Naive thymus-derived CD4-positive, alpha-beta T cell (primary cell): ENCODE measurements at regions of chr1 and their contacts with region 1.

Region 1: GRCh38 chr1:171485375-171486047 is at the start of gene PRRC2C:
- DNase-seq: peak; percentile 80 to 95 (median 94)
- ATAC-seq: peak; percentile 93
- H3K4me3 ChIP-seq: peak within 1 kb of the TSS; percentile 93
- H3K4me3 Mint-ChIP-seq: peak within 1 kb of the TSS; percentile 83 to 99 (median 96)
- H3K27ac ChIP-seq: peak within 1 kb of the TSS; percentile 99
- H3K27ac Mint-ChIP-seq: peak within 1 kb of the TSS; percentile 92 to 100 (median 97)
- H3K4me1 ChIP-seq: peaks cover 34 to 46% of the 10 kb centered on the region in 2 donors
- H3K4me1 Mint-ChIP-seq: peaks cover 39 to 54% (median 49%) of the 10 kb centered on the region in 7 donors
- H3K27me3 ChIP-seq: no peaks in the 10 kb centered on the region
- H3K27me3 Mint-ChIP-seq: no peaks in the 10 kb centered on the region
- total RNA-seq, gene PRRC2C: 256 to 341 (median 293) TPM

Region 2: DNA sequence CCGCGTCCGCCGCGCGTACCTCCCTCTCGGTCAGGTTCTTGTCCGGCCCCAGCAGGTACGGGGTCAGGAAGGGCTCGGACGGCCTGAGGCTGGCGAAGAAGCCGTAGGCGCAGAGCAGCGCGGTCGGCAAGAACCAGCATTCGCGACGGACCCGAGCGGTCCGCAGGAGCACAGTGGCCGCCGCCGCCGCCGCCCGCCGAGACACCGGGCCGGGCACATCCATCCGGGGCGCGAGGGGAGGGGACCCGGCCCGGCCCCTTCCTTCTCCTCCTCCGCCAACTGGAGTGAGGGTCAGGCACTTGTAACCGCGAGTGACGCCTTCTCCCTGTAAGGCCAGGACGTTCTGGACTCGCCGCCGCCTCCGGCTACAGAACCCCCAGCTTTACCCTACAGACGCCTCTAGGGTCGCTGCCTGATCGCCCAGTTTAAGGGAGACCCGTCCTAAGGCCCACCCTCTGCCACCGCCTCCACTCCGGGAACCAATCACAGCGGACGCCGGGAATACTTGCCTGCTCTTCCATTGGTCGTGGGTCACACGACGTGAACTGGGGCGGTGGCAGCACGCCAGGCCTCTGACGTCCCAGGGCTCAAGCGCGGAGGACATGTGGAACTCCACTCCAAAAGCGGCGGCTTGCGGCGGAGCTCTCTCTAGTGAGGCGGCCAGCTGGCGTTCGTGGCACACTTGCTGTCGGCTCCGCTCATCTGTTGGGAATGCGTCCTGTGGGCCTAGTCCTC is 1999.8 kb before region 1 on chr1 and contains the start of gene SLC19A2:
- CTCF ChIA-PET with region 1: no interaction called
- POLR2A ChIA-PET with region 1: no interaction called
- intact Hi-C with region 1: loop called (anchors 5 kb)
- DNase-seq: peak; percentile 79 to 94 (median 89)
- ATAC-seq: peak; percentile 99
- H3K4me3 ChIP-seq: peak within 1 kb of the TSS; percentile 66
- H3K4me3 Mint-ChIP-seq: peak within 1 kb of the TSS; percentile 87 to 98 (median 94)
- H3K27ac ChIP-seq: peak within 1 kb of the TSS; percentile 81
- H3K27ac Mint-ChIP-seq: peak within 1 kb of the TSS; percentile 86 to 98 (median 94)
- H3K4me1 ChIP-seq: peaks cover 4 to 12% of the 10 kb centered on the region in 2 donors
- H3K4me1 Mint-ChIP-seq: peaks cover 35 to 56% (median 46%) of the 10 kb centered on the region in 7 donors
- H3K27me3 ChIP-seq: no peaks in the 10 kb centered on the region
- H3K27me3 Mint-ChIP-seq: peaks cover 0 to 8% (median 0%) of the 10 kb centered on the region in 5 donors
- total RNA-seq, gene SLC19A2: 3.7 to 5.9 (median 4.8) TPM

Region 3: GRCh38 chr1:170074250-170075157 is 1411.0 kb before region 1 on chr1 and contains the start of gene KIFAP3:
- CTCF ChIA-PET with region 1: no interaction called
- POLR2A ChIA-PET with region 1: no interaction called
- intact Hi-C with region 1: loop called (anchors 2 to 10 kb)
- DNase-seq: peak; percentile 84 to 94 (median 92)
- ATAC-seq: peak; percentile 96
- H3K4me3 ChIP-seq: peak within 1 kb of the TSS; percentile 76
- H3K4me3 Mint-ChIP-seq: peak within 1 kb of the TSS; percentile 89 to 99 (median 96)
- H3K27ac ChIP-seq: peak within 1 kb of the TSS; percentile 90
- H3K27ac Mint-ChIP-seq: peak within 1 kb of the TSS; percentile 83 to 98 (median 94)
- H3K4me1 ChIP-seq: peaks cover 15 to 37% of the 10 kb centered on the region in 2 donors
- H3K4me1 Mint-ChIP-seq: peaks cover 34 to 65% (median 57%) of the 10 kb centered on the region in 7 donors
- H3K27me3 ChIP-seq: no peaks in the 10 kb centered on the region
- H3K27me3 Mint-ChIP-seq: peaks cover 0 to 3% (median 0%) of the 10 kb centered on the region in 5 donors
- total RNA-seq, gene KIFAP3: 12.8 to 23.8 (median 20.1) TPM

Region 4: DNA sequence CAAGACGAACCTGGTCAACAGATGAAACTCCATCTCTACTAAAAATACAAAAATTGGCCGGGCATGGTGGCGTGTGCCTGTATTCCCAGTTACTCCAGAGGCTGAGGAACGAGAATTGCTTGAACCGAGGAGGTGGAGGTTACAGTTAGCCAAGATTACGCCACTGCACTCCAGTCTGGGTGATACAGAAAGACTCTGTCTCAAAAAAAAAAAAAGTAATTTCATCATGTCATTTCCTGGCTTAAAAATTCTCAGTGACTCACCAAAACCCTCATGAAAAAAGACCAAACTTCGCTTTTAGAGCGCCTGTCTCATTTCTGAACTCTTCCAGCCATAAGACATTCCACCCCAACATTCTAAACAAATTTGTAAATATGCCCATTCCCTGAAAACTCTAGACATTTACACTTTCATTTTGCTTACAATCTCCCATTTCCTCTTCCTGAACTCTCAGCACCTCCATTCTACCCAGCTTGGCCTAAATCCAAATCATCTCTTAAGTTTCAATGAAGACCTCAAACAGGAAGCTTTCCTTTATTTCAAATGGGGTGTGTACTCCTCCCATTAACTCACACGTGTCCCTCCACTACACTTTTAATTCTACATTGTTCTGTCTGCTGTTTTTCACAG is 50.7 kb before region 1 on chr1:
- CTCF ChIA-PET with region 1: no interaction called
- POLR2A ChIA-PET with region 1: no interaction called
- intact Hi-C with region 1: loop called in 1 of 2 experiments (anchors 1 kb)
- DNase-seq: peak in 7 of 9 donors; percentile 1 to 30 (median 11)
- ATAC-seq: peak; percentile 54
- H3K4me3 ChIP-seq: no peak overlapping the region
- H3K4me3 Mint-ChIP-seq: peak overlapping the region; percentile 22 to 77 (median 74)
- H3K27ac ChIP-seq: no peak overlapping the region
- H3K27ac Mint-ChIP-seq: peak overlapping the region; percentile 43 to 86 (median 78)
- H3K4me1 ChIP-seq: no peaks in the 10 kb centered on the region
- H3K4me1 Mint-ChIP-seq: peaks cover 10 to 24% (median 19%) of the 10 kb centered on the region in 7 donors
- H3K27me3 ChIP-seq: no peaks in the 10 kb centered on the region
- H3K27me3 Mint-ChIP-seq: peaks cover 0 to 6% (median 2%) of the 10 kb centered on the region in 5 donors

Region 5: GRCh38 chr1:171563675-171564074 is 78.2 kb after region 1 on chr1:
- CTCF ChIA-PET with region 1: no interaction called
- POLR2A ChIA-PET with region 1: no interaction called
- intact Hi-C with region 1: loop called in 1 of 2 experiments (anchors 5 kb)
- DNase-seq: no peak
- ATAC-seq: no peak
- H3K4me3 ChIP-seq: no peak overlapping the region
- H3K4me3 Mint-ChIP-seq: no peak overlapping the region
- H3K27ac ChIP-seq: no peak overlapping the region
- H3K27ac Mint-ChIP-seq: no peak overlapping the region
- H3K4me1 ChIP-seq: no peaks in the 10 kb centered on the region
- H3K4me1 Mint-ChIP-seq: peaks cover 0 to 7% (median 0%) of the 10 kb centered on the region in 7 donors
- H3K27me3 ChIP-seq: no peaks in the 10 kb centered on the region
- H3K27me3 Mint-ChIP-seq: no peaks in the 10 kb centered on the region

Region 6: GRCh38 chr1:171781176-171781875 is 295.8 kb after region 1 on chr1 and contains the start of gene METTL13:
- CTCF ChIA-PET with region 1: no interaction called
- POLR2A ChIA-PET with region 1: interaction called, 8 read pairs
- intact Hi-C with region 1: loop called (anchors 1 kb)
- DNase-seq: peak; percentile 89 to 100 (median 99)
- ATAC-seq: peak; percentile 95
- H3K4me3 ChIP-seq: peak within 1 kb of the TSS; percentile 95
- H3K4me3 Mint-ChIP-seq: peak within 1 kb of the TSS; percentile 90 to 99 (median 94)
- H3K27ac ChIP-seq: peak within 1 kb of the TSS; percentile 74
- H3K27ac Mint-ChIP-seq: peak within 1 kb of the TSS; percentile 93 to 99 (median 96)
- H3K4me1 ChIP-seq: peaks cover 20 to 41% of the 10 kb centered on the region in 2 donors
- H3K4me1 Mint-ChIP-seq: peaks cover 28 to 65% (median 58%) of the 10 kb centered on the region in 7 donors
- H3K27me3 ChIP-seq: no peaks in the 10 kb centered on the region
- H3K27me3 Mint-ChIP-seq: no peaks in the 10 kb centered on the region
- total RNA-seq, gene METTL13: 15.6 to 50.7 (median 34.5) TPM

Region 7: DNA sequence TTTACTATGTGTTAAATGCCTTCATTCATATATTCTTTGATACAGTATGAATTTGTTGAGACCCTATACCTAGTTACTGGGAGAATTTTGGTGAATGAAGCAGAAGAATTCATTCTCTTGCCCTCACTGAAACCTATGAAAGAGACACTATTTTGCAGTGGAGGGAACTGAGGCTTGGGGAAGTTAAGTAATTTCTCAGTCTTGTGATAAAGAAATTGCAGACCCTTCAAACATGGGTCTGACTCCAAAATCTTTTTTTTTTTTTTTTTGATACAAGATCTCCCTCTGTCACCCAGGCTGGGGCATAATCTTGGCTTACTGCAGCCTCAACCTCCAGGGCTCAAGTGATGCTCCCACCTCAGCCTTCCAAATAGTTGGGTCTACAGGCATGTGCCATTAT is 487.9 kb after region 1 on chr1:
- CTCF ChIA-PET with region 1: no interaction called
- POLR2A ChIA-PET with region 1: no interaction called
- intact Hi-C with region 1: no loop called
- DNase-seq: no peak
- ATAC-seq: no peak
- H3K4me3 ChIP-seq: no peak overlapping the region
- H3K4me3 Mint-ChIP-seq: no peak overlapping the region
- H3K27ac ChIP-seq: no peak overlapping the region
- H3K27ac Mint-ChIP-seq: no peak overlapping the region
- H3K4me1 ChIP-seq: no peaks in the 10 kb centered on the region
- H3K4me1 Mint-ChIP-seq: no peaks in the 10 kb centered on the region
- H3K27me3 ChIP-seq: no peaks in the 10 kb centered on the region
- H3K27me3 Mint-ChIP-seq: peaks cover 0 to 13% (median 0%) of the 10 kb centered on the region in 5 donors

Region 8: DNA sequence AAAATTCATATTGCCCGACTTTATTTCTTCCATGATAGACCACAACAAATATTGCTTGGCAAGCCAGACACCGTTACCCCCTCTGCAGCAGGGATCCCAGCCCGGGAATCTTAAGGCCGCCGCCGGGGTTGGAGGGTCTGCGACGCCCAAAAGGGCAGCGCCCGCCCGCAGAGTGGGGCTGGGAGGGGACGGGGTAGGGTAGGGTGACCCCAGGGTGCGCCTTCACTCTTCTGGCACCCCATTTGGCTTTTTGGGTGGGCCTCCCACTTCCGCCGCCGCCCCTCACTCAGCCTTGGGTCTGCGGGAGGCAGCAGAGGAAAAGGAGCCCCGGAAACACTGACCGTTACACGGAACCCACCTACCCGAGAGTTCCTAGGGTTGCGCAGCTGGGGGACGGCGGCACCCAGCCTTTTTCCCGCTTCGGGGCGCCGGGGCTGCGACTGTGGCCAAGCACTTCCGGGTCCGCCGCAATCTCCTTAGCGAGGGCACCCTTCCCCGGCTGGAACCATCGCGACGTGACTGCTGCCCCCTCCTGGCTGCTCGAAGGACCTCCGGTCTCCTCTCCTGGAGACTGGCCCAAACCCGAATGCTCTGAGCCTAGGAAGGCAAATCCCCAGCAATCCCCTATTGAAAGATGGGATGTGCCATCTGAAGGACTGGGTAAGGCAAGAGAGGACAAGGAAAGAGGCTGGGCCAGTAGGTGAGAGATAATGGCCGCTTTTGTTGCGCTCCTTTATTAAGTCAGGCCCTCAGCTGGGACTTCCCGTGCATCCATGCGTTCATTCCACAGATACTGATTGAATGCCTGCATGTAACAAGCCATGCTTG is 958.3 kb after region 1 on chr1 and contains the start of gene PIGC:
- CTCF ChIA-PET with region 1: no interaction called
- POLR2A ChIA-PET with region 1: no interaction called
- intact Hi-C with region 1: loop called (anchors 10 kb)
- DNase-seq: peak; percentile 78 to 89 (median 87)
- ATAC-seq: peak; percentile 100
- H3K4me3 ChIP-seq: peak within 1 kb of the TSS; percentile 72
- H3K4me3 Mint-ChIP-seq: peak within 1 kb of the TSS; percentile 87 to 98 (median 94)
- H3K27ac ChIP-seq: peak within 1 kb of the TSS; percentile 83
- H3K27ac Mint-ChIP-seq: peak within 1 kb of the TSS; percentile 91 to 97 (median 93)
- H3K4me1 ChIP-seq: peaks cover 15 to 25% of the 10 kb centered on the region in 2 donors
- H3K4me1 Mint-ChIP-seq: peaks cover 27 to 53% (median 47%) of the 10 kb centered on the region in 7 donors
- H3K27me3 ChIP-seq: no peaks in the 10 kb centered on the region
- H3K27me3 Mint-ChIP-seq: no peaks in the 10 kb centered on the region
- total RNA-seq, gene PIGC: 21.1 to 57.4 (median 25.1) TPM